HCT116 (cell line): ENCODE measurements at regions of chr14 and their contacts with region 1.

Region 1: DNA sequence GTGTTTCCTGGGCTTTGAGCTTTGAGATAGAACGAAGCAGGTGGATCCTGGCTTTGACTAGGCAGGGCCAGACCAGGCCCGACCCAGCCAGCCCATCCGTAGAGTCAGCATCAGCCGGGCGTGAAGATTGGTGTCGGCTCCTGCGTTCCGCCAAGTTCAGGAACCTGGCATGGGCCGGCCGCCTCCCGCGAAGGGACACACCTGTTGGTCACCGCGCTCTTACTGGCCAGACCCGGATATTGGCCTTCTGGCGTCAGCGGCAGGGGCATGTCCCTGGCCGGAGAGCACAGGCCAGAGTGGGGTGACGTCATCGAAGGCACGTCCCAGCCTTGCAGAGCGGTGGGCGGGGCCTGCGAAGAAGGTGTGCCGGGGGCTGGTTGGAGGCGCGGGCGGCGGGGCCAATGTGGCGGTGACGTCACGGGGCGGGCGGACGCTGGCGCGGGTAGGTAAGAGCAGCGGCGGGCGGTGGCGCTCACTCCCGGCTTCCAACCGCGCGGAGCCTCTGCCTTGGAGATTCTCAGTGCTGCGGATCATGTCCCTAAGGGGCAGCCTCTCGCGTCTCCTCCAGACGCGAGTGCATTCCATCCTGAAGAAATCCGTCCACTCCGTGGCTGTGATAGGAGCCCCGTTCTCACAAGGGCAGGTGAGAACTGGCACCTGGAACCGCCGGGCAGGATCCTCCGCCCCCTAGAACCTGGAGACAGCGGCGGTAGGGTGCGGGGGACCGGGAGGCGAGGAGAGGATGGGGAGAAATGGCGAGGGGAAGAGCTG is at the start of gene ARG2:
- DNase-seq: peak; percentile 98
- ATAC-seq: peak; percentile 95
- H3K4me3 ChIP-seq: peak within 1 kb of the TSS; percentile 52 to 66
- H3K27ac ChIP-seq: no peak within 1 kb of the TSS
- H3K4me1 ChIP-seq: peaks cover 15 to 32% of the 10 kb centered on the region in 2 experiments
- H3K27me3 ChIP-seq: no peaks in the 10 kb centered on the region
- CTCF ChIP-seq: no peak
- POLR2A ChIP-seq: peak; percentile 46
- RAD21 ChIP-seq: 0 out of 2 replicates have a peak, but pooled peaks have one; percentile 34
- total RNA-seq, gene ARG2: 7.0 TPM

Region 2: DNA sequence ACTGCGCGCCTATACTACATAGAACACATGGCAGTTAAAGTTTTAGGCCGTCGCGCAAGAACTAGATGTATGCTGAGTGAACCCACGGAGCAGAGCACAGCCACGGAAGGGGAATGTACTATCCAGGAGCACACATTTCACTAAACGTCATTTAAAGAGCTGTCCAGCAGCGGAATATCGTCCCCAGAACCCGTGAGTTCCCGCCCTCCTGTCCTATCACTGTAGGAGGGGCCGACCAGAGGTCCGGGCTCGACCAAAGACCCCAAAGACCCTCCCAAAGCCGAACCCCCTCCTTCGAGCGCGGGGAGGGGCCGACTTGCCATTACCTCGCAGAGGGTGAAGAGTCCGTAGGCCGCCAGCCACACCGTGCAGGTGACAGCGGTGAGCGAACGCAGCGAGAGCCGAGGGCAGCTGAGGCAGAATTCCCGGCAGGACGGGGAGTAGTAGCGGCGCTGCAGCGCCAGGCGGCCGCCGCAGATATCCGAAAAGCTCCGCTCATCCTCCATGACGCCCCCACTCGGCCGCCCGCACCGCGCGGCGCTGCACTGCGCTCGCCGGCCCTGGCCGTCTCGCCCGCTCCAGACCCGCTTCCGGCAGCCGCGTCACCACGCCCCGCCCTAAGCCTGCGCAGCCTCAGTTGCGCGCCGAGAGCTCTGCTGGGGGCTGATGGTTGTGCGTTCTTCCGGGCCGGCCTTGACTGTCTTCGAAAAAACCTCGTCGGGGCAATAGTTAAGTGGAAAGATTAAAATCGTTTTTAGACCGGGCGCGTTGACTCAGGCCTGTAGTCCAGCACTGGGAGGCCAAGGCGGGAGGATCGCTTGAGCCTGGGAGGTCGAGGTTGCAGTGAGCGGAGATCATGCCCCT is 19.7 kb before region 1 on chr14 and contains the start of gene PIGH:
- CTCF ChIA-PET with region 1: interaction called, 12 read pairs
- POLR2A ChIA-PET with region 1: interaction called, 4 read pairs
- RAD21 ChIA-PET with region 1: no interaction called
- intact Hi-C with region 1: no loop called
- DNase-seq: peak; percentile 69
- ATAC-seq: peak; percentile 98
- H3K4me3 ChIP-seq: peak within 1 kb of the TSS; percentile 74 to 91
- H3K27ac ChIP-seq: peak within 1 kb of the TSS; percentile 65
- H3K4me1 ChIP-seq: peaks cover 3 to 16% of the 10 kb centered on the region in 2 experiments; a peak in 2 of 4 replicates
- H3K27me3 ChIP-seq: no peaks in the 10 kb centered on the region
- CTCF ChIP-seq: peak; percentile 44 to 60 (median 49); a peak in 5 of 6 replicates
- POLR2A ChIP-seq: peak; percentile 26
- RAD21 ChIP-seq: peak; percentile 13; the same call in 1 of the 2 replicates
- total RNA-seq, gene PIGH: 20.9 TPM

Region 3: DNA sequence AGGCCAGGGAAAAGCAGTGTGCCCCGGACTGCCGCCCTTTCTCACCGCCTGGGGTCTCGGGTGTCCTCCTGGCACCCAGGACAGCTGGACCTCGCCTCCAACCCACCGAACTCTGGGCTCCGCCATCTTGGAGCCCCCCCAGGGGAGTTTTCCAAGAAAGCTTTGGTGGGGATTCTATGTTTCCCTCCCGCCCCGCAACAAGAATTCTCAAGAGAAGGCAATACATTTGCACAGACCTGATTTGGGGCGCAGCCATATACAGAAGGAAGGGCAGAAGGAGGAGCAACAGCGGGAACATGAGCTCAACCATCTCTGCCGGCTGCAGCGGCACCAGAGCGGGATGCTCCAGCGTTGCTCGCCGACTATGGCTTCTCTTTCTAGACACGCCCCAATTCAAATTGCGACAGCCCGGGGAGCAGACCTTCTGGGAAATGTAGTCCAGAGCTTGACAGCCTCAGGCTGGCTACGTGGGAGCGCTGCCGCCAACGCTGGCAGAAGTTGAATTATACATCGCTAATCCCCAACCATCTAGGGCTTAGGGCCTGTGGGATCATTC is 75.8 kb after region 1 on chr14 and contains the start of gene RDH11:
- CTCF ChIA-PET with region 1: no interaction called
- POLR2A ChIA-PET with region 1: interaction called, 5 read pairs
- RAD21 ChIA-PET with region 1: interaction called in 1 of 2 experiments, 3 read pairs
- intact Hi-C with region 1: loop called (anchors 2 kb)
- DNase-seq: peak; percentile 85
- ATAC-seq: peak; percentile 91
- H3K4me3 ChIP-seq: peak within 1 kb of the TSS; percentile 87 to 92
- H3K27ac ChIP-seq: peak within 1 kb of the TSS; percentile 80
- H3K4me1 ChIP-seq: peaks cover 8 to 29% of the 10 kb centered on the region in 2 experiments; a peak in 3 of 4 replicates
- H3K27me3 ChIP-seq: no peaks in the 10 kb centered on the region
- CTCF ChIP-seq: no peak
- POLR2A ChIP-seq: peak; percentile 76
- RAD21 ChIP-seq: no peak
- total RNA-seq, gene RDH11: 54.6 TPM